Activated CD4-positive, alpha-beta memory T cell treated with anti-CD3 and anti-CD28 coated beads for 36 hours (primary cell): ENCODE measurements at regions of chr17 and their contacts with region 1.

Region 1: DNA sequence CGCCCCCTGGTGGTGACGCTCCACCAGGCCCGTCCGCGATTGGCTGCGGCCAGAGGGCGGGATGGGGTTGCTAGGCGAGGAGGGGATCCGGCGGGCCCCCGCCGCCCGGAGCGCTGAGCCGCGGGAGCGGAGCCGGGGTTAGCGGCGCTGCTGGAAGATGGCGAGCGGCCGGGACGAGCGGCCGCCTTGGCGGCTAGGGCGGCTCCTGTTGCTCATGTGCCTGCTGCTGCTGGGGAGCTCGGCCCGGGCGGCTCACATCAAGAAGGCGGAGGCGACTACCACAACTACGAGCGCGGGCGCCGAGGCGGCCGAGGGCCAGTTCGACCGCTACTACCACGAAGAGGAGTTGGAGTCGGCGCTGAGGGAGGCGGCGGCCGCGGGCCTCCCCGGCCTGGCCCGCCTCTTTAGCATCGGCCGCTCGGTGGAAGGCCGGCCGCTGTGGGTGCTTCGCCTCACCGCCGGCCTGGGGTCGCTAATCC is at the start of gene CPD:
- DNase-seq: peak; percentile 98
- H3K4me3 Mint-ChIP-seq: peak within 1 kb of the TSS; percentile 82
- H3K27ac Mint-ChIP-seq: peak within 1 kb of the TSS; percentile 75
- H3K4me1 Mint-ChIP-seq: peaks cover 65% of the 10 kb centered on the region
- H3K27me3 Mint-ChIP-seq: no peaks in the 10 kb centered on the region
- total RNA-seq, gene CPD: 34.1 to 34.3 TPM

Region 2: GRCh38 chr17:30363715-30364202 is 15.1 kb before region 1 on chr17:
- CTCF ChIA-PET with region 1: interaction called, 4 read pairs
- POLR2A ChIA-PET with region 1: interaction called, 9 read pairs
- intact Hi-C with region 1: loop called (anchors 1 kb)
- DNase-seq: peak; percentile 94
- H3K4me3 Mint-ChIP-seq: peak overlapping the region; percentile 13
- H3K27ac Mint-ChIP-seq: peak overlapping the region; percentile 78
- H3K4me1 Mint-ChIP-seq: peaks cover 28% of the 10 kb centered on the region
- H3K27me3 Mint-ChIP-seq: no peaks in the 10 kb centered on the region

Region 3: GRCh38 chr17:30413109-30413508 is 34.2 kb after region 1 on chr17:
- CTCF ChIA-PET with region 1: no interaction called
- POLR2A ChIA-PET with region 1: interaction called, 3 read pairs
- intact Hi-C with region 1: loop called (anchors 1 kb)
- DNase-seq: no peak
- H3K4me3 Mint-ChIP-seq: no peak overlapping the region
- H3K27ac Mint-ChIP-seq: peak overlapping the region; percentile 58
- H3K4me1 Mint-ChIP-seq: peaks cover 30% of the 10 kb centered on the region
- H3K27me3 Mint-ChIP-seq: no peaks in the 10 kb centered on the region

Region 4: DNA sequence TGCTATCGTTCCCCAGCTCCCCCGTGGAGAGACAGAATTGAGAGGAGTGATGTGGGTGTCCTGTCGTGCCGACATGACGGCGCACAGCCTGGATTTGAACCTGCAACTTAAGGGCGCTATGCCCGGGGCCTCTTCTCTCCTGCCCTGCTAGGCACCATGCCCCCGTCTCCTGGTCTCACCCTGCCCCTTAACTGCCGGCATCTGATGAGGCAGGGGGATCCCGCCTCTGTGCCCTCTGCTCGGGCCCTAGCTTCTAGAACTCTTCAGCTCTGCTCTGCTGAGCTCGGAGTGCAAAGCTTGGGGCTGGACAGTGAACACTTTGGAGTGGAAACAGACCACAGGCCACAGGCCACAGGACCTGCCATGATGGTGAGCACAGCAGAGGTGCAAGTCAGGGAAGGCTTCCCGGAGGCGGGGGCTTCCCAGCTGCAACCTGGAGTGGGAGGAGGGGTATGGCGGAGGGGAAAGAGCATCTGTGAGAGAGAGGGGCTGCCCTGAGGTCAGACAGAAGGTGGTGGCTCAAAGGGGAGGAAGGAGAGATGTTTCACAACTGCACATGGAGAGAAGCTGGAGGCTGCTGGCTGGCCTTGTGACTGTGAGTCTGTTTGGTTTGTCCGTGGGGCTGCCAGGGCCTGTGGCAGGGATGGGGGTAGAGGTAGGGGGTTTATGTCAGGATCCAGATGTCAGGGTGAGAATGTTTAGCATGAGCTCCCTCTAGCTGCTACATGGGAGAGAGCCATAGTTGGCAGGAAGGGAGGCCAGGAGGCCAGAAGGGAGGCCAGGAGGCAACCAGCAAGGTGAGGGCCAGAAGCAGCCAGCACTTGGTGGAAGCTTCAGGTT is 337.8 kb after region 1 on chr17:
- CTCF ChIA-PET with region 1: no interaction called
- POLR2A ChIA-PET with region 1: no interaction called
- intact Hi-C with region 1: loop called (anchors 10 kb)
- DNase-seq: no peak
- H3K4me3 Mint-ChIP-seq: no peak overlapping the region
- H3K27ac Mint-ChIP-seq: no peak overlapping the region
- H3K4me1 Mint-ChIP-seq: peaks cover 6% of the 10 kb centered on the region
- H3K27me3 Mint-ChIP-seq: no peaks in the 10 kb centered on the region